ENCODE measurements at regions of chr14 and their contacts with region 1.

Region 1: GRCh38 chr14:27427796-27428195 is 830.0 kb upstream of the NOVA1 start:
- DNase-seq: no peak
- ATAC-seq: no peak
- H3K4me3 ChIP-seq: no peak overlapping the region
- H3K27ac ChIP-seq: no peak overlapping the region
- H3K4me1 ChIP-seq: no peaks in the 10 kb centered on the region
- H3K27me3 ChIP-seq: no peaks in the 10 kb centered on the region
- CTCF ChIP-seq: no peak
- EP300 ChIP-seq: no peak
- POLR2A ChIP-seq: no peak
- RAD21 ChIP-seq: no peak

Region 2: DNA sequence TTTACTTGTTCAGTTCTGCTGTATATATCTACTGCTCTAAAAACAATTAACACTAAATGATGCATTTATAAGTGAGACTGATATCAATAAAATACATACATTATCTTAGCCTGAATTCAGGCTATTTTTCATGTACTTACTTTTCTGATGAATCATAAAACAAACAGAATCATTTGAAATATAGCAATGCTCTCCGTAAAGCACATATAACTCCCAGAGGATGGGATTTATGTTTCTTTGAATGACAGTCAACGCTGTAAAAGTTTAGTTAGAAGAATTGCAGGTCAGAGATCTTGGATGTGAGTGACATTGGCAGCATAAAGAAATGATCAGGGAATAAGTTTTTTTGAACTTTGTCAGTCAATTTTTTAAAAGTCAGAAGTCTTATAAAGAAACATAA is 89.8 kb before region 1 on chr14:
- CTCF ChIA-PET with region 1: no interaction called
- POLR2A ChIA-PET with region 1: no interaction called
- RAD21 ChIA-PET with region 1: no interaction called
- SMC1A ChIA-PET with region 1: no interaction called
- in situ Hi-C with region 1: no loop called
- intact Hi-C with region 1: no loop called
- DNase-seq: no peak
- ATAC-seq: no peak
- H3K4me3 ChIP-seq: no peak overlapping the region
- H3K27ac ChIP-seq: no peak overlapping the region
- H3K4me1 ChIP-seq: no peaks in the 10 kb centered on the region
- H3K27me3 ChIP-seq: no peaks in the 10 kb centered on the region
- CTCF ChIP-seq: no peak
- EP300 ChIP-seq: no peak
- POLR2A ChIP-seq: no peak
- RAD21 ChIP-seq: no peak

Region 3: DNA sequence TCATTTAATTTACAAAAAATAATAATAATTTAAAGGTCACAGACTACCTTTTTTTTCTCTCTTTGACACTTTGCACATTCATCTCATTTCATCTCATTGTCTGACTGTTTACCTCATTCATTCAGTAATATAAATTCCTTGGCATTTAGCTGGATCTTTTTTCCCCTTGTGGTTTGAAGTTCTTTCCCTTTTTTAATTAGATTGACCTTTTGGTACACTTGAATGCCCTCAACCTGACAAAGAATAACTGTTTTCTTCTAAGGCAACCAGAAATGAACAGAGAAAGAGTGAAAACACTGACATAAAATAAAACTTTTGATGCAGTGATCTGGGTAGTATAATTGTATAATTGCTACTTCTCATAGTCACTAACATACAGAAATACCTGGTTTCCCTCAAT is 55.0 kb before region 1 on chr14:
- CTCF ChIA-PET with region 1: no interaction called
- POLR2A ChIA-PET with region 1: no interaction called
- RAD21 ChIA-PET with region 1: no interaction called
- SMC1A ChIA-PET with region 1: no interaction called
- in situ Hi-C with region 1: no loop called
- intact Hi-C with region 1: no loop called
- DNase-seq: no peak
- ATAC-seq: no peak
- H3K4me3 ChIP-seq: no peak overlapping the region
- H3K27ac ChIP-seq: no peak overlapping the region
- H3K4me1 ChIP-seq: no peaks in the 10 kb centered on the region
- H3K27me3 ChIP-seq: no peaks in the 10 kb centered on the region
- CTCF ChIP-seq: no peak
- EP300 ChIP-seq: no peak
- POLR2A ChIP-seq: no peak
- RAD21 ChIP-seq: no peak

Region 4: GRCh38 chr14:27484633-27485032 is 56.8 kb after region 1 on chr14:
- CTCF ChIA-PET with region 1: no interaction called
- POLR2A ChIA-PET with region 1: no interaction called
- RAD21 ChIA-PET with region 1: no interaction called
- SMC1A ChIA-PET with region 1: no interaction called
- in situ Hi-C with region 1: no loop called
- intact Hi-C with region 1: loop called (anchors 5 kb)
- DNase-seq: no peak
- ATAC-seq: no peak
- H3K4me3 ChIP-seq: no peak overlapping the region
- H3K27ac ChIP-seq: no peak overlapping the region
- H3K4me1 ChIP-seq: no peaks in the 10 kb centered on the region
- H3K27me3 ChIP-seq: no peaks in the 10 kb centered on the region
- CTCF ChIP-seq: no peak
- EP300 ChIP-seq: no peak
- POLR2A ChIP-seq: no peak
- RAD21 ChIP-seq: no peak

Region 5: GRCh38 chr14:27608378-27608777 is 180.6 kb after region 1 on chr14:
- CTCF ChIA-PET with region 1: no interaction called
- POLR2A ChIA-PET with region 1: no interaction called
- RAD21 ChIA-PET with region 1: no interaction called
- SMC1A ChIA-PET with region 1: no interaction called
- in situ Hi-C with region 1: no loop called
- intact Hi-C with region 1: no loop called
- DNase-seq: no peak
- ATAC-seq: no peak
- H3K4me3 ChIP-seq: no peak overlapping the region
- H3K27ac ChIP-seq: no peak overlapping the region
- H3K4me1 ChIP-seq: no peaks in the 10 kb centered on the region
- H3K27me3 ChIP-seq: no peaks in the 10 kb centered on the region
- CTCF ChIP-seq: no peak
- EP300 ChIP-seq: no peak
- POLR2A ChIP-seq: no peak
- RAD21 ChIP-seq: no peak

Measured in GM12878 (cell line).